ENCODE measurements at regions of chr15 and their contacts with region 1.

Region 1: DNA sequence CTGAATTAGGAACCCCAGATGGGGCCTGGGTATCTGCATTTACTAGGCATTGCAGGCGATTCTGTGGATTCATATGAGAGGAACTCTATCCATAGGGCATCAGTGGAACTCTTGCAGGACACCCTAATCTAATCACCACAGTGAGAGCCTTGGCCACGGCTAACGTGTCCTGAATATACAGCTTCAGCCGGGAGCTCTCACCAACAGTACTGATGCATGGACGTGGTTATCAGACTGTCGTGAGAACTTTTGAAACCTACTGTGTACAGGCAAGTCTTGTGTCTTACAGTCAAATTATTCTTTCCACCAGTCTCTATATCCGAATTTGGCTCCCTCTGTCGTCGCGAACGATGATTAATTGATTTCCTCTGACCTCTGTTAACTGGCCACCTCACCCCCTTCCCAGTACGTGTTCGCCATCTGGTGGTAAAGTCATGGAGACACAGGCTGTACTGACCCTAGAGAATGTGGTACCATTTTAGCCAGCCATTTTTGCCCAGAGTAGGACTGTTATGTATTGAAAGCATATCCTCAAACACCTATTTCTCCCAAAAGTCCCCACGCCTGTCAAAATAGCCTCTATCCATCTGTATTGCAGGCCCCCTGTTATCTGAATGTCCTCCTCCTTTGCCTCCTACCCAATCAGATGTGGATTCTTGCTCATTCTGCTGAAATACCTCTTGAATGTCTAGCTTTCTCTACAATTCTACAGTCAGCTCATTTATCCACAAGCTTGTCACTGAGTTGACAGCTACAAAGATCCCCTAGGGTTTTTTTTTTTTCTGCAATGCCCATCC is 39.7 kb downstream of the GLDN start:
- DNase-seq: peak; percentile 11
- H3K4me3 ChIP-seq: no peak overlapping the region
- H3K27ac ChIP-seq: no peak overlapping the region
- H3K27me3 ChIP-seq: peaks cover 18% of the 10 kb centered on the region
- CTCF ChIP-seq: peak; percentile 96

Region 2: GRCh38 chr15:51132384-51133139 is 248.6 kb before region 1 on chr15:
- CTCF ChIA-PET with region 1: interaction called, 10 read pairs
- POLR2A ChIA-PET with region 1: no interaction called
- DNase-seq: peak; percentile 81
- H3K4me3 ChIP-seq: no peak overlapping the region
- H3K27ac ChIP-seq: peak overlapping the region; percentile 80
- H3K27me3 ChIP-seq: no peaks in the 10 kb centered on the region
- CTCF ChIP-seq: peak; percentile 98

Region 3: DNA sequence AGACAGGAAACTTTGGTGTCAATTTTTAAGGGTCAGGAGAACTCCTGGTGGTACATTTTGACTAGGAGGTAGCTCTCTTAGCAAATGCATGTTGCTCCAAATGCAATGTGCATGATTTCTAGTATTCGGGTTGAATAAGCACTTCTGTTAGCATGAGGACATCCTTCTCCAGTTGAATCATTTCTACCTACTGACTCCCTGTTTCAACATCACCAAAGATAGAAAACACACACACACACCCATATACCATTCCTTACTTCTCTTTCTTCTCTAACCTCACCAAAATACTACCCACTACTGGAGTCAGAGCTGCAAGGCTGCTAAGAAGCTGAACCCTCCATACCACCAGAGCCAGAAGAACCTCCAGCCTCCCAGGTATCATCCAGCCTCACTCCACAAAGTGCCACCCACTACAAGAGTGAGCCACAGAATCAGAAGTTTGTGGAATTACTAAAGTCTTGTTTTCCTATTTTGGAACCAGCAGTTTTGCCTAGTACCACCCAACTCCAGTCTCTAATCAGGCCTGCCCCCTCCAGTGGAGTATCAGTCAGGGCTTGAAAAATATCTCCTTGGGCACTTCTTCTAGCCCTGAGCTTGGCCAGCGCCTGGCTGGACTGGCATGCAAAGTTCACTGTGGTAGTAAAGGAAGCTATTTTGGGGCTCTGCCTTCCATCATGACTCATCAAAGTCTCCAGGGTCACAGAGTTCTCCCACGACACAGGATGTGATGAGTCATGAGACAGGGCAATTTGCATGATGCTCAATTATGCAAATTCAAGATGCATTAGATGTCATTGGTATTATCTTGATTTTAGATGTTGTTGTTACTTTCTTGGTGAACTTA is 153.0 kb before region 1 on chr15:
- CTCF ChIA-PET with region 1: interaction called, 56 read pairs
- POLR2A ChIA-PET with region 1: no interaction called
- DNase-seq: peak; percentile 27
- H3K4me3 ChIP-seq: no peak overlapping the region
- H3K27ac ChIP-seq: no peak overlapping the region
- H3K27me3 ChIP-seq: peaks cover 2% of the 10 kb centered on the region
- CTCF ChIP-seq: 0 out of 2 replicates have a peak, but pooled peaks have one; percentile 4

Region 4: GRCh38 chr15:51274946-51275345 is 106.3 kb before region 1 on chr15:
- CTCF ChIA-PET with region 1: interaction called, 132 read pairs
- POLR2A ChIA-PET with region 1: no interaction called
- DNase-seq: no peak
- H3K4me3 ChIP-seq: no peak overlapping the region
- H3K27ac ChIP-seq: no peak overlapping the region
- H3K27me3 ChIP-seq: peaks cover 50% of the 10 kb centered on the region
- CTCF ChIP-seq: no peak

Region 5: DNA sequence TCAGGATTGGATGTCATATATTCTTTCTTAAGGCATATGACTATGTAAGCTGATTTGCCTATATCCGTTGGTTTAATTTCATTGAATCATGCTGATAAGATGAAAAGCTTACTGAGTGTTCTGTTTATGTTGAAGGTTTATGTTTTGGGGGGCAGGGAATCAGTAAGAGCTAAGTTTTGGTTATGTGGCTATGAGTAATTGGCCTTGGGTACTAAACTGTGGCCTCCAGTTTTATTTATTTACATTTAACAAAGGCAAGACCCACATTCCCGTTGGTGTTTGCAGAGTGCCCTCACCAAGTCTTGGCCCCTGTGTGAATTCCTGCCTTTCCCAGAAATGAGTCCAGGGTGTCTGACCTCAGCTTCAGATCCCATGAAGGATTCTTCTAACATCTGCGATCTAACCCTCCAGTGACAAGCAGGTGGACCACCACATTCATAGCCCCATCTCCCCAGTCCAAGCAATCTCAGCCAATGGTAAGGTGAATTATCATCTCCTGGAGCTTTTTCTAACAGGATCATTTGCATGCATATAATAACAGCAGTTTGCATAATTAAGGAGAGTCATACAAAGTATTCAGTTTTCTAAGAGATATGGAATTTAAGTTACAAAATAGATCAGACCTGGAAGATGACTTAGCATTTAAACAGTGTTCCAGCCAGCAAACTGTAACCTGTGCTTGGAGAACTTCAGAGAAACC is 12.3 kb before region 1 on chr15:
- CTCF ChIA-PET with region 1: interaction called, 13 read pairs
- POLR2A ChIA-PET with region 1: interaction called, 6 read pairs
- DNase-seq: peak; percentile 81
- H3K4me3 ChIP-seq: no peak overlapping the region
- H3K27ac ChIP-seq: peak overlapping the region; percentile 85
- H3K27me3 ChIP-seq: no peaks in the 10 kb centered on the region
- CTCF ChIP-seq: no peak